Motor neuron (in vitro differentiated cells): ENCODE measurements at regions of chr14 and their contacts with region 1.

Region 1: DNA sequence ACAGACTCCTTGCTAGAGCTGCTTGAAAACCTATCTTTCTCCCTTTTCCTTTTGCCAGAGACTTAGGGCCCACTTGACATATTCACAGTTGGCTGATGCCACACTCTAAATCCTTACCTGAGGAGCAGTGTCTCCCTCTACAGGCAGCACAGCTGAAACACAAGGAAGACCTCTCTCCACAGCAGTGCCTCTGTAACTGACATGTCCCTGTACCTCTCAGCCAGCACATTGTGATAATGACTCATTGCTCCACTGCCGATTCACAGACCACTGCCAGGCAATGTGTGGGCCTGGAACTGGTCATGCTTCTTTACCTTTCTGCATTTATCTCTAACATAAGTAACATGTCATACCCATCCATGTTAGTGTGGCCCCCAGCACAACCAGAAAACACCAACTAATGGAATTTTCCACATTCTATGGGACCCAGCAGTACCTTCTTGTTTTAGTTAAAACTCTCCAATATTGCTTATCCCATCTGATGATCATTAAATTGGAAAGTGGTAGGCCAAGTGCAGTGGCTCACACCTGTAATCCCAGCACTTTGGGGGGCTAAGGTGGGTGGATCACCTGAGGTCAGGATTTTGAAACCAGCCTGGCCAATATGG is 56.5 kb downstream of the GTF2A1 start:
- ATAC-seq: peak; percentile 85 to 98 (median 96)
- H3K4me3 ChIP-seq: no peak overlapping the region
- H3K27ac ChIP-seq: no peak overlapping the region
- H3K4me1 ChIP-seq: no peaks in the 10 kb centered on the region

Region 2: DNA sequence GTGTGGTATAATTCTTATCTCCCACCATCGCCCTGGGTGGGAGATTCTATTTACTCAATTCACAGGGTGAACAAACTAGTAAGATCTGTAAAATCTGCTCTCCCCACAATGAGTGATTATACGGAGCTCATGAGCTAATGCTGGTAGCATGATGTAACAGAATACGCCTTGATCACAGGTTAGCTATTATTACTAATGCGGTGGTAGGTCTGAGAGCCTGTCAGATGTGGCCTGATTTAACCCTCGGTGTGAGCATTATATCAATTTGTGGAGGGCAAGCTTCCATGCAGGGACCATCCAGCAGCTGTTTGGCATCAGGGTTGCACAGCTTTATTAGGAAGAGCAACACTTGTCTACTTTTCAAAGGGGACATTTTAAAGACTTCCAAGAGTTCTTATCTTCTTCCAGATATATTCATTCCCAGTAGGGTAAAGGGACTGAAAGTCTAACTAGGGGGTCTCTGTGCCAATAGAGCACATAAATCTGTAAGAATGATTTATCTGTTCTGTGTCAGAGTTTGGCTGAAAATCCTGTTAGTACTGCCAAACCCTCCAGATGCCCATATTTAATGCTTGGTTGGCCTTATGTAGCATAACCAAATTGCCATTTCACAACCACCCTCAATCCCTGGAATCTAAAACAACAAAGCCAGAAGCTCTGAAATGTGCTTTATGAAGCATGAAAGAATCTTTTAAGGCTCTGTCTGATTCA is 190.2 kb before region 1 on chr14:
- in situ Hi-C with region 1: loop called in 3 of 9 experiments (anchors 10 to 25 kb)
- ATAC-seq: peak; percentile 30 to 90 (median 78)
- H3K4me3 ChIP-seq: no peak overlapping the region
- H3K27ac ChIP-seq: no peak overlapping the region
- H3K4me1 ChIP-seq: peaks cover 0 to 6% of the 10 kb centered on the region in 2 donors

Region 3: DNA sequence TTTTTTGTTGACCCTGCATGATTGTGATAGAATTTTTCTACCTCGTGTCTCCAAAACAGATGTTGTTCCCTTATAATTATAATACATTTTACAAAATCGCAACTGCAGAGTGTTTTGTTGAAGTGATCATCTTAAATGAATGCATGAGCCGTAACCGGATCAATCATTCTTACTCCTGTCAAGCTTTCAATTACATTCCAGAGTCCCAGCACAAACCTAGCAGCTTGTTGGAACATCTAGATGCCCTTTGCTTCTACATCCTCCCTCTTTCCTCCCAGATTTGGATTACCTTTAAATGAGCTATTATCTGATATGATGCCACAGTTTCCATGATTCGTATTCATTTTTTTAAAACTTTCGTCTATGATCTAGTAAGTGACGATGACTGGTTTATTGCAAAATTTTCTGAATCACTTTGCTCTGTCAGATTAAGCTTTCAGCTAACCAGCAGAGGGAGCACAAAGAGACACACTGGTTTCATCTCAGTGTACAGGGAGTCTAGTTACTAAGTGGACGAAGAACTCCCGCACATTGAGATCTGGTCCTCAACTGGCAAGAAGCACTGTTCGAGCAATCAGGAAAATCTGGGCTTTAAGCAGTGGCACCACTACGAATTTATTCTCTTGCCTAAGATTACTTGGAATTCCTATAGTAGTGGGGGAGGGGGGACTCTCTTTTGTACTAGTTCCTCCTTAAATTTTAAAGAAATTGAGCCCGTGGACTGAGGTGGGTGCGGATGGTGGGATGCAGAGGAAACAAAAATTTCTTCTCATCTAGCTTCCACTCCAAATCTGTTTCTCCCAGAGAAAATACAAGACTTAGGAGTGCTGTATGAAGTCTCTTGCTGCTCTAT is 168.0 kb before region 1 on chr14:
- in situ Hi-C with region 1: loop called in 4 of 9 experiments (anchors 10 to 25 kb)
- ATAC-seq: peak in 3 of 8 experiments; percentile 94 to 100 (median 99)
- H3K4me3 ChIP-seq: no peak overlapping the region
- H3K27ac ChIP-seq: no peak overlapping the region
- H3K4me1 ChIP-seq: peaks cover 0 to 7% of the 10 kb centered on the region in 2 donors

Region 4: DNA sequence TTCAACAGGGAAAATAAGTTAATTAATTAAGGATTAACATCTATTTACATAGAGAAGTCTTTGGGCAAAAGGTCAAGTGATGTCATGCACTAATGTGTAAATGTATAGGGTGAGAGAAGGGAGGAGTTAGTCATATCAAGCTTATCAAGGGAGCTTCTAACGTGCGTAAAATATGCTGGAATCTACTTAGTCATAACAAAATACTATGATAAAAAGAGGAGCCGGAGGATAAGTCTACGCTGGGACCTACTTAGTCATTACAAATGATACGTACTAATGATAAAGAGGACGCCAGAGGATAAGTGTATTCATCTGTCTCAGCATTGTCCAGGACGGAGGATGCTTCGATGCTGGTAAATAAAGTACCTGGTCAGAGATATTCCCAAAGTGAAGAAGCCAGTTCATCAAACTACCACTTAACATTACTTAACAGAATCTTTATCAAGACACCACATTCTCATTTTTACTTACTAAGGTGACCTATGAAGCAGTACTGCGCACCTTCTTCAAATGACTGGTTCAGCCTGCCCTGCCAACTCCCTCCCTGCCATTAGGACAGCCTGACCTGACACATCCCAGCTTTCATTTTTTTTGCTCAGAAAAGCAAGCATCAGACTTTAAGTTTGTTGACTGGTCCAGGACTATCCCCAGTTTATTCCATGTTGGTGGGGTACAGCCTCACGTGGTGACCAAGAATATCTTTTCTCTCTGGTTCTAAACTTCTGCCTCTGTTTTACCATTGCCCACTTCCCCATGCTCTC is 122.9 kb after region 1 on chr14:
- in situ Hi-C with region 1: no loop called
- ATAC-seq: peak in 2 of 8 experiments; percentile 58 to 84
- H3K4me3 ChIP-seq: no peak overlapping the region
- H3K27ac ChIP-seq: no peak overlapping the region
- H3K4me1 ChIP-seq: peaks cover 0 to under 1% of the 10 kb centered on the region in 2 donors